ENCODE measurements at regions of chr12 and their contacts with region 1.

Region 1: GRCh38 chr12:121522971-121523370 is 57.9 kb downstream of the KDM2B start:
- DNase-seq: no peak
- H3K4me3 ChIP-seq: no peak overlapping the region
- CTCF ChIP-seq: no peak

Region 2: DNA sequence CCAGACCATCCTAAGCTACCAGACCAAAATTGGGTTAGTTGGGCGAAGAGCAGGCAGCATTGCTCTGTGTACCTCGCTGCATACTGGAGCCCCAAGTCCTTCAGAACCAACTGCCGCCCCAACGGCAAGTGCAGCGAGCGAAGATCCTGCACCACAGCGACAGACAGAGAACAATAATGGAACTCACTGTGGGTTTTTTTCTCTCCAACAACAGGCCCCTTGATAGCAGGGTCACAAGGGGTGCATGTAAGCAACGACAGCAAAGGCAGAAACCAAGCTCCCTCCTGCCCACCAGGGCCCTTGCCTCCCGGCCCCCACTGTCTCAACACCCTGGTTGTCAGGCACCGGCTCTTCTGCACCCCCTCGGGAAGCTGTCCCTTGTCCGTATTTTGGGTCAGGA is 84.1 kb before region 1 on chr12:
- in situ Hi-C with region 1: loop called (anchors 5 kb)
- DNase-seq: no peak
- H3K4me3 ChIP-seq: no peak overlapping the region
- CTCF ChIP-seq: no peak

Measured in astrocyte of the cerebellum (primary cell).